ENCODE measurements at regions of chr1 and their contacts with region 1.

Region 1: GRCh38 chr1:188027613-188028012 is 1198.9 kb downstream of the PLA2G4A start:
- DNase-seq: peak; percentile 94
- H3K4me3 ChIP-seq: no peak overlapping the region
- H3K27ac ChIP-seq: peak overlapping the region; percentile 94
- H3K4me1 ChIP-seq: peaks cover 25% of the 10 kb centered on the region
- H3K27me3 ChIP-seq: no peaks in the 10 kb centered on the region
- CTCF ChIP-seq: no peak
- POLR2A ChIP-seq: peak; percentile 28

Region 2: GRCh38 chr1:187655175-187655574 is 372.4 kb before region 1 on chr1:
- CTCF ChIA-PET with region 1: no interaction called
- POLR2A ChIA-PET with region 1: no interaction called
- dilution Hi-C with region 1: no loop called
- intact Hi-C with region 1: loop called (anchors 2 kb)
- DNase-seq: peak; percentile 61
- H3K4me3 ChIP-seq: no peak overlapping the region
- H3K27ac ChIP-seq: peak overlapping the region; percentile 94
- H3K4me1 ChIP-seq: peaks cover 3% of the 10 kb centered on the region
- H3K27me3 ChIP-seq: no peaks in the 10 kb centered on the region
- CTCF ChIP-seq: no peak
- POLR2A ChIP-seq: no peak

Region 3: GRCh38 chr1:188237571-188238353 is 210.1 kb after region 1 on chr1:
- CTCF ChIA-PET with region 1: no interaction called
- POLR2A ChIA-PET with region 1: no interaction called
- dilution Hi-C with region 1: no loop called
- intact Hi-C with region 1: loop called (anchors 5 kb)
- DNase-seq: peak; percentile 79
- H3K4me3 ChIP-seq: peak overlapping the region in 1 of 3 experiments; percentile 23
- H3K27ac ChIP-seq: peak overlapping the region; percentile 73
- H3K4me1 ChIP-seq: peaks cover 24% of the 10 kb centered on the region
- H3K27me3 ChIP-seq: no peaks in the 10 kb centered on the region
- CTCF ChIP-seq: no peak
- POLR2A ChIP-seq: no peak